ENCODE measurements at regions of chr12 and their contacts with region 1.

Region 1: DNA sequence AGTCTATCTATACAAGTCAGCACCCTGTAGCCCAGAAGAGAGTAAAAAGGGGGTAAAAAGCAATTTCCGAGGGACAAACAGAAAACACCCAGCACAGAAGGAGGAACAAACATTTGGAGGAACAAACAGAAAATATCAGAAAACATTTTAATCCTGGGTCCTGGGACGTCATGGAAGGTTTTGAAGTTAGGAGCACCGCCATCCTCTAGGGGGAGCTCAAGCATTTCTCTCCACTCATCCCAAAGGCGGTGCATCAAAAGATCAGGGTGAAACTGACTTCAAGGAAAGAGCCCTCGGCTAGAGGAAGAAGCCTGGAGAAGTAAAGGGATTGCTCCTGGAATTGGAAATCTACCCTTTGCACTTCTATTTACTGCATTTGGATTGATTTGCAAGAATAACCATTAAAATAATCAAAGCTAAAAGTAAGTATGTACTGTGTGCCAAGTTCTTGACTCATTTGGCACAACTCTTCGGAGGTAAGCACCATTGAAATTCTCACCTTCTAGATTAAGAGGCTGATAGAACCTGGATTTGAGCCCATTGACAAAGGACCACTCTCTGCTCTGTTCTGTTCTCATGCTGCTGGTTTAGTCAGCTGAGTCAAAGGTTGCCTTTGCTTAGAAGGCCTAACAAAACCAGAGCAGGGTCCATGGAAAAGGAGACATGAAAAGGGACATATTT is 17.2 kb upstream of the POC1B start:
- DNase-seq: no peak
- H3K4me3 ChIP-seq: no peak overlapping the region
- H3K27ac ChIP-seq: no peak overlapping the region
- H3K4me1 ChIP-seq: peaks cover 0 to 30% (median 13%) of the 10 kb centered on the region in 6 donors
- H3K27me3 ChIP-seq: no peaks in the 10 kb centered on the region
- CTCF ChIP-seq: peak; percentile 76 to 91 (median 87)
- POLR2A ChIP-seq: no peak

Region 2: GRCh38 chr12:89244536-89244935 is 298.5 kb before region 1 on chr12:
- intact Hi-C with region 1: no loop called
- DNase-seq: no peak
- H3K4me3 ChIP-seq: peak overlapping the region in 1 of 8 donors; percentile 50
- H3K27ac ChIP-seq: peak overlapping the region in 7 of 8 donors; percentile 45 to 85 (median 71)
- H3K4me1 ChIP-seq: peaks cover 10 to 37% (median 24%) of the 10 kb centered on the region in 6 donors
- H3K27me3 ChIP-seq: no peaks in the 10 kb centered on the region
- CTCF ChIP-seq: no peak
- POLR2A ChIP-seq: no peak

Region 3: DNA sequence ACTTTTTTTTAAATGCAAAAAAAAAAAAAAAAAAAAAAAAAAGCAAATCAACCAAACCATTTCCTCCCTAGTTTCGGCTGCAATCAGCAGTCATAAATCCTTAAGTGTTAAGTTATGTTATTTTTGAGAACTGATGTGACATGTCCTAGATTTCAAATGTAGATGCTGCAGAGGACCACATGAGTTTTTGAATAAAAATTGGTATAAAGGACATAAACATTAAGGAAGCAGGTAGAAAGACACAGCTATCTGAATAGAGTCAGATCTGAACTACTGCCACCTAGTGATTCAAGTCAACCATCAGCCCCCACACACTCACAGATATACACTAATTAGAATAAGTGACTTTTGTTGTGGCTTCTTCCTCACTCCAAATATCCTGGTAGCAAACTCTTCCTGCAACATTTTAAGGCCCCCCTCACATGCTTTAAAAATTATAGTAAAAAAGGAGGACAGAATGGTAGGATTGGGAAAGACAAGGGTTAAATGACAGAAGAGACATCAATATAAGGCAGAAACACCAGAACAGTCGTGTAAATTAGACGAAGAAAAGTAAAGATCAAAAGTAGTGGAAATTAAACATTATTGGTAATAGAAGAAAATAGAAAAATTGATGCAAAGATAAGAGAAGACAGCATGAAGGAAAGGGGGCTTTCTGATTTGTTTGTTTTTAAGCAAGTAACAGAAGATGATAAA is 560.1 kb after region 1 on chr12:
- intact Hi-C with region 1: loop called (anchors 5 kb)
- DNase-seq: no peak
- H3K4me3 ChIP-seq: peak overlapping the region in 1 of 8 donors; percentile 49
- H3K27ac ChIP-seq: no peak overlapping the region
- H3K4me1 ChIP-seq: peaks cover 0 to 9% (median 1%) of the 10 kb centered on the region in 6 donors
- H3K27me3 ChIP-seq: no peaks in the 10 kb centered on the region
- CTCF ChIP-seq: peak in 9 of 11 experiments; percentile 20 to 66 (median 53)
- POLR2A ChIP-seq: no peak

Region 4: DNA sequence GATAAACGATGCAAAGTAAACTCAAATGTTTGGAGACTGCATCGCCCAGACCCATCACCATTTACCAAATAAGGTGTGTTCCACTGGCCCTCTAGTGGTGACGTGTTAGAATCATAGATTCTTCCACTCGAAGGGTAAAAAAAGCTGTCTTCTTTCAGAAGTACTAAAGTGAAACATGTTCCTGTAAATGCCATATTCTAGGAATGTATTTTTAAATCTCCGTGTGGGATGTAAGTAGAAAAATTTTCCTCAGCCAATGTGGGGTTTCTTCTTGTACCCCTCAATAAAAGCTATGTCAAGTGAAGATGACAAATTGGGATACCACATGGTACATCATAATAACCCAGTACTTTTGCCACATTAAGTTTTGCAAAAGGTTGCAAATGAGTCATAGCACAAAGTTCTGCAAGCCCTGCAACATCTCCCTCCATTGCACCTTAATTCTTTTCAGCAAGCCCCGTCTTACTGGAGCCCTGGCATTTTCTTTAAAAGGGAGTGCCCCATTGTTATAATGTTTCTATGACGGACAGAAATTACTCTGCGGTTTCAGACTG is 1311.2 kb after region 1 on chr12:
- intact Hi-C with region 1: loop called (anchors 5 kb)
- DNase-seq: no peak
- H3K4me3 ChIP-seq: no peak overlapping the region
- H3K27ac ChIP-seq: no peak overlapping the region
- H3K4me1 ChIP-seq: peaks cover 0 to 8% (median 0%) of the 10 kb centered on the region in 6 donors
- H3K27me3 ChIP-seq: no peaks in the 10 kb centered on the region
- CTCF ChIP-seq: peak in 9 of 11 experiments; percentile 30 to 67 (median 49)
- POLR2A ChIP-seq: no peak

Region 5: GRCh38 chr12:90959538-90960139 is 1416.6 kb after region 1 on chr12:
- intact Hi-C with region 1: loop called (anchors 10 kb)
- DNase-seq: no peak
- H3K4me3 ChIP-seq: no peak overlapping the region
- H3K27ac ChIP-seq: no peak overlapping the region
- H3K4me1 ChIP-seq: no peaks in the 10 kb centered on the region
- H3K27me3 ChIP-seq: no peaks in the 10 kb centered on the region
- CTCF ChIP-seq: peak in 9 of 11 experiments; percentile 37 to 70 (median 58)
- POLR2A ChIP-seq: no peak

Measured in spleen (tissue), 13 donors.